PC-9 (cell line): ENCODE measurements at regions of chr4 and their contacts with region 1.

Region 1: DNA sequence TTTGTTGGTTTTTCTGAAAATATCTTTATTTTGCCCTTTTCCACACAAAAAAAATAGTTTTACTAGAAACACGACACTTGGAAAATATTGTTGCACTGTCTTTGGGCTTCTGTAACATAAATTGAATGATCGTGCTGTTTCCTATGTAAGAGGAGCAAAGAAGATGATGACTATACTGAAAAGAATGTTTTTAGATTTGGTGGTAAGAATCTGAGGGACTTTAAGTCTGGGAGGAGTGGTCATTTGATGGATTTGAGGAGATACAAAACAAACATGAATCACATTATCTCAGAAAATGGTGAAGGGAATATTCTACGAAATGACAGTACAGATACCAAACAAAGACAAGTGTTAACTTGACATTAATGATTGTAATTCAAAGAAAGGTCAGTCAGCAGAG is 328.8 kb downstream of the ADAM29 start:
- DNase-seq: no peak
- H3K4me3 ChIP-seq: no peak overlapping the region
- H3K27ac ChIP-seq: no peak overlapping the region
- H3K4me1 ChIP-seq: no peaks in the 10 kb centered on the region
- H3K27me3 ChIP-seq: no peaks in the 10 kb centered on the region
- CTCF ChIP-seq: no peak

Region 2: DNA sequence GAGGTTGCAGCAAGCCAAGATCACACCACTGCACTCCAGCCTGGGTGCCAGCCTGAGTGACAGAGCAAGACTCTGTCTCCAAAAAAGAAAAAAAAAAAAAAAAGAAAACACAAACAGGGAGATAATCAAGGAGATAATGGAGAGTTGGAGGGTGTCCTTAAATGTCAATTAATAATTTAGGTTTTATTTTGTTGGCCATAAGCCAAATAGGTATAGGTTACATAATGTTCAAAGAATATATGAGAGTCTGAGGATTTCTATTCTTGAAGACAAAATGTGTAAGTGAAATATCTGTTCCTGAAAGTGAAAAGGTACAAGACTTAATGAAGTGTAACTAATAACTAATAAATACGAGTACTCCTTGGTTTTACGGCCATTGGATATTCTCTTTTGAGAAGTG is 359.2 kb before region 1 on chr4:
- CTCF ChIA-PET with region 1: no interaction called
- POLR2A ChIA-PET with region 1: no interaction called
- intact Hi-C with region 1: loop called (anchors 5 kb)
- DNase-seq: no peak
- H3K4me3 ChIP-seq: no peak overlapping the region
- H3K27ac ChIP-seq: no peak overlapping the region
- H3K4me1 ChIP-seq: no peaks in the 10 kb centered on the region
- H3K27me3 ChIP-seq: no peaks in the 10 kb centered on the region
- CTCF ChIP-seq: no peak